Activated CD8-positive, alpha-beta T cell treated with anti-CD3 and anti-CD28 coated beads, Interleukin-2, amount 10 ng/mL, durations not matched to agents 7 days and 5 days (primary cell): ENCODE measurements at regions of chr5 and their contacts with region 1.

Region 1: GRCh38 chr5:175718401-175719108 is 60.7 kb downstream of the HRH2 start:
- DNase-seq: peak; percentile 69
- ATAC-seq: no peak
- H3K4me3 Mint-ChIP-seq: no peak overlapping the region
- H3K27ac Mint-ChIP-seq: no peak overlapping the region
- H3K4me1 Mint-ChIP-seq: peaks cover 3% of the 10 kb centered on the region
- H3K27me3 Mint-ChIP-seq: peaks cover 2% of the 10 kb centered on the region

Region 2: GRCh38 chr5:175542232-175542965 is 176.2 kb before region 1 on chr5:
- CTCF ChIA-PET with region 1: interaction called, 12 read pairs
- POLR2A ChIA-PET with region 1: no interaction called
- DNase-seq: no peak
- ATAC-seq: no peak
- H3K4me3 Mint-ChIP-seq: no peak overlapping the region
- H3K27ac Mint-ChIP-seq: no peak overlapping the region
- H3K4me1 Mint-ChIP-seq: peaks cover 24% of the 10 kb centered on the region
- H3K27me3 Mint-ChIP-seq: peaks cover 10% of the 10 kb centered on the region

Region 3: GRCh38 chr5:175689147-175689991 is 29.2 kb before region 1 on chr5:
- CTCF ChIA-PET with region 1: interaction called, 10 read pairs
- POLR2A ChIA-PET with region 1: no interaction called
- DNase-seq: no peak
- ATAC-seq: no peak
- H3K4me3 Mint-ChIP-seq: no peak overlapping the region
- H3K27ac Mint-ChIP-seq: peak overlapping the region; percentile 22
- H3K4me1 Mint-ChIP-seq: peaks cover 52% of the 10 kb centered on the region
- H3K27me3 Mint-ChIP-seq: no peaks in the 10 kb centered on the region

Region 4: GRCh38 chr5:175696139-175696854 is 22.3 kb before region 1 on chr5:
- CTCF ChIA-PET with region 1: interaction called, 19 read pairs
- POLR2A ChIA-PET with region 1: no interaction called
- DNase-seq: peak; percentile 85
- ATAC-seq: peak; percentile 87
- H3K4me3 Mint-ChIP-seq: peak overlapping the region; percentile 49
- H3K27ac Mint-ChIP-seq: peak overlapping the region; percentile 73
- H3K4me1 Mint-ChIP-seq: peaks cover 50% of the 10 kb centered on the region
- H3K27me3 Mint-ChIP-seq: no peaks in the 10 kb centered on the region

Region 5: DNA sequence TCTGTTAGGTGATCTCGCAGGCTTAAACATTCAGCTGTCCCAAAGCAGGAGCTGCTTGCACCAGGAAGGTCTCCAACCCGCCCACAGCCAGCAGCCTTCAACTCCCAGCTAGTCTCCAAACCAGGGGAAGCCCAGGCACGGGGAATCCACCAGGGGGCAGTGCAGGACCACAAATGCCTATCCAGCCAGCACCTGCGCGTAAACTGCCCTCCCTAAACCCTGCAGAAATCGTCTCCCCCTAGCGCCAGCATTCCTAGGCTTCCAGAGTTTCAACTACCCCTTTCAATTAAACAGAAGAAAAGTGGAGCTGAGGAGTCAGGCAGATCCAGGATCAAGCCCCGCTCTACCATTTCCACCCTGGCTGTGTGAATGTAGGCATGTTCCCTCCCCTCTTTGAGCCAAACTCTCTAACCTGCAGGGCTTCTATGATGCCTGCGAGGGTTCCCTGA is 11.3 kb after region 1 on chr5:
- CTCF ChIA-PET with region 1: interaction called, 30 read pairs
- POLR2A ChIA-PET with region 1: no interaction called
- DNase-seq: peak; percentile 92
- ATAC-seq: peak; percentile 96
- H3K4me3 Mint-ChIP-seq: no peak overlapping the region
- H3K27ac Mint-ChIP-seq: no peak overlapping the region
- H3K4me1 Mint-ChIP-seq: peaks cover 6% of the 10 kb centered on the region
- H3K27me3 Mint-ChIP-seq: peaks cover 11% of the 10 kb centered on the region